ENCODE measurements at regions of chr17 and their contacts with region 1.

Region 1: GRCh38 chr17:6843241-6843880 is 11.8 kb upstream of the TEKT1 start:
- DNase-seq: peak; percentile 12 to 48 (median 18)
- ATAC-seq: no peak
- H3K4me3 ChIP-seq: no peak overlapping the region
- H3K27ac ChIP-seq: no peak overlapping the region
- H3K4me1 ChIP-seq: no peaks in the 10 kb centered on the region; a peak in 2 of 5 replicates
- H3K27me3 ChIP-seq: no peaks in the 10 kb centered on the region; a peak in 2 of 5 replicates
- CTCF ChIP-seq: peak; percentile 26 to 61 (median 37); a peak in 3 of 6 replicates
- EP300 ChIP-seq: no peak
- POLR2A ChIP-seq: no peak
- RAD21 ChIP-seq: peak; percentile 48 to 75; a peak in 3 of 4 replicates

Region 2: DNA sequence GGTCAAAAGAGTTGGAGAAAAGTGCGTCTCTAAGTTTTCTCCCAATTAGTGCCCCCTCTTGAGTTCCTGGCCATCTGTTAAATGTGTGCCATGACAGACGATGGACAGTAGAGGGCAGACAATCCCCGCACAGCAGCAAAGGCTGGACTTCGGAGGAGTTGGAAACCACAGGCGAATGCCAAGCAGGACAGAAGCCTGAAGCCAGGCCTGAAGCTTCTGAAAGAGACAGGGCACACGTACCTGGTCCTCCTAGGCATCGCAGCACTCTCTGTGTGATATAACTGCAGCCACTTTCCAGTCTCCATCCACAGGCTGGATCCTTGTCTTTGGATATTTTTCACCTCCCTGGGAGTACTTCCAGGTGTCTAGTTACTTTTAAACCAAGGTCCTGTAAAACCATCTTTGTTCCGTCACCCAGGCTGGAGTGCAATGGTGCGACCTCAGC is 177.3 kb before region 1 on chr17:
- CTCF ChIA-PET with region 1: no interaction called
- POLR2A ChIA-PET with region 1: no interaction called
- in situ Hi-C with region 1: no loop called
- intact Hi-C with region 1: loop called (anchors 5 kb)
- DNase-seq: peak; percentile 54 to 74 (median 62)
- ATAC-seq: peak; percentile 93
- H3K4me3 ChIP-seq: no peak overlapping the region
- H3K27ac ChIP-seq: no peak overlapping the region
- H3K4me1 ChIP-seq: no peaks in the 10 kb centered on the region
- H3K27me3 ChIP-seq: peaks cover 6 to 36% of the 10 kb centered on the region in 2 experiments; a peak in 4 of 5 replicates
- CTCF ChIP-seq: peak; percentile 85 to 86 (median 85)
- EP300 ChIP-seq: no peak
- POLR2A ChIP-seq: no peak
- RAD21 ChIP-seq: peak; percentile 70 to 82

Region 3: DNA sequence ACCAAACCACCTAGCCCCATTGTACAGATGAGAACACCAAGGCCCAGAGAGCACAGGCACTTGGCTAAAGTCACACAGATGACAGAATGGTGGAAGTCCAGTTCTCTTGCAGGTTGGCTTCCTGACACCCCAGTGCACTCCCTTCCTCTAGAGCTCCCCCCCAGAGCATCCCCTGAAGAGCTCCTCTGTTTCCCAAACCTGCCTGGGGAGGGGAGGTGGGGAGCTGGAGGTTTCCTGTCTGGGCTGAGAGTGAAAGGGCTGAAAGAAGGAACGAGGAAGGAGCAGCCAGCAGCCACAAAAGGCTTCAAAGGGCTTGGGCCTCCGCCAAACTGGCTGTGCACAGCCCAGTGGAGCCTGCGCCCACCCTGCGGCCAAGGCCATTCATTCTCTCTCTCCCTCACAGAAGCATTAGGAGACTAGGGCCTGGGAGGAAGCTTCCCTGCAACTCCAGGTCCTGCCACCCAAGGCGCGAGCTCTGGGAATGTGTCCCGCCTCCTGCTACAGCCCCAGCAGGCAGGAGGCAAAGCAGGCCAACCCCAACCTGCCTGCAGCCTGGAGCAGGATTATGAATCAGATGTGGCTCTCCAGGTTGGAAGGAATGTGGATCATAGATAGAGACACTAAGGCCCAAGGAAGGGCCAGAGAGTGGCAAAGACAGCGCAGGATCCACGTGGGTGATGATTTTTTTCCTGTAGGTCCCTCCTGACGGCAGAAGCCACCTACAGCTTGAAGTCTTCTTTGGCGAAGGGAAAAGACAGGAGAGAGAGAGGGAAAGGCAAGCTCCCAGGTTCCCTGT is 131.1 kb before region 1 on chr17:
- CTCF ChIA-PET with region 1: no interaction called
- POLR2A ChIA-PET with region 1: no interaction called
- in situ Hi-C with region 1: no loop called
- intact Hi-C with region 1: no loop called
- DNase-seq: no peak
- ATAC-seq: no peak
- H3K4me3 ChIP-seq: no peak overlapping the region
- H3K27ac ChIP-seq: no peak overlapping the region
- H3K4me1 ChIP-seq: peaks cover 0 to 14% of the 10 kb centered on the region in 2 experiments; a peak in 2 of 5 replicates
- H3K27me3 ChIP-seq: peaks cover 0 to 23% of the 10 kb centered on the region in 2 experiments; a peak in 2 of 5 replicates
- CTCF ChIP-seq: no peak
- EP300 ChIP-seq: no peak
- POLR2A ChIP-seq: no peak
- RAD21 ChIP-seq: no peak

Region 4: DNA sequence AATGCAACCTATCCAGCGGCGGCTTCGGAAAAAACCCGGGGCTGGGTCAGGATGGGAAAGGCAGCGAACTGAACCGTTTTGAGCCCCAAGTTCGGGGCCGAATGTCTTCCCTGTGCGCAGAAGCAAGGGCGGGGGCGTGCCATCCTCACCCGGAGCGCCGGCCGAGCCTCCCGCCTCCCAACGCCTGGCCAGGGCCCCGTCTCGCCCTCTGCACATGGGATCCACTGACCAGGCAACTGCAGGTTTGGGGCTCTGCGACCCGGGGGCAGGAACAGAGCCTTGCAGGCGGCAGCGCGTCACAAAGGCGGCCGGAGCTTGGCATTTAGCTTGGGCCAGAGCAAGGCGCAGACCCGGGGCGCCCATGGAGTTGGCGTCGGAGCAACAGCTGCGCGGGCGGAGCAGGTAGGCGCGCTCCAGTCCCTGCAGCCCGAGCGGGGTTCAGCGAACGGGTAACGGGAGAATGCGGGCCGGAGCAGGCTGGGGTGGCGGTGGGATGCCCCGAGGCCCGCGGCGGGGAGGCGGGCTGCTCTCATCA is 67.4 kb before region 1 on chr17 and contains the start of gene FBXO39:
- CTCF ChIA-PET with region 1: no interaction called
- POLR2A ChIA-PET with region 1: no interaction called
- in situ Hi-C with region 1: no loop called
- intact Hi-C with region 1: no loop called
- DNase-seq: no peak
- ATAC-seq: no peak
- H3K4me3 ChIP-seq: no peak within 1 kb of the TSS
- H3K27ac ChIP-seq: no peak within 1 kb of the TSS
- H3K4me1 ChIP-seq: peaks cover 0 to 6% of the 10 kb centered on the region in 2 experiments; a peak in 1 of 5 replicates
- H3K27me3 ChIP-seq: peaks cover 12 to 38% of the 10 kb centered on the region in 2 experiments; a peak in 4 of 5 replicates
- CTCF ChIP-seq: no peak
- EP300 ChIP-seq: no peak
- POLR2A ChIP-seq: no peak
- RAD21 ChIP-seq: no peak
- polyA plus RNA-seq, gene FBXO39: not detected

Region 5: DNA sequence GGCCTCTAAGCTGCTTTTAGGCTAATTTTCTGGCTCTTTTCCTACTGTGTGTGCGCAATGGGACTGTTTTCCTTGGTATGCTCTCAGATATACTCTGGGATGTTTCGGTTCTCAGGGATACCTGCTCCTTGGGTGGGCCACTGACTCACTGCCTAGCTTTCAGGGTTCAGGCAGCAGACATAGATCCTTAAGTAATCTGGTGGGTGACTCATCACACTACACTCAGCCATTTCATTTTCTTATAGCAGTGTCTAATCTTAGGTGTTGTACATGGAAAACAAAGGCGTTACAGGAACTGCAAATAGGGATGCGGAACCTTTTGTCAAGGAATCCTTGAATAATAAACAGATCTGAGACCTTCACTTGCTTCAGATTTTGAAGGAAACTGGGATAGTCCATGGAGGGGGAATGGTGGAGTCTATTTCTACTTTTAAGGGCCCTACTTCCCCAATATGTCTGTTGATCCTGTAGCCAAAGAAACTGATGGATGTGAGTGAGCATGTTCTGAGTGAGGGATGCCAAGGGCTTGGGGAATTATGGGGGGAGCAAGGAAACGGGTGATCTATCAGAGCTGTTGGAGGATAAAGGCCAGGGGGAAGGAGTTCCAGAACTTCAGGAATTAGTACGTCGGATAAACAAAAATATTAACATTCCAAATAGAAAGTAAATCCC is 28.9 kb after region 1 on chr17:
- CTCF ChIA-PET with region 1: no interaction called
- POLR2A ChIA-PET with region 1: no interaction called
- in situ Hi-C with region 1: no loop called
- intact Hi-C with region 1: no loop called
- DNase-seq: no peak
- ATAC-seq: no peak
- H3K4me3 ChIP-seq: no peak overlapping the region
- H3K27ac ChIP-seq: no peak overlapping the region
- H3K4me1 ChIP-seq: no peaks in the 10 kb centered on the region
- H3K27me3 ChIP-seq: peaks cover 3 to 6% of the 10 kb centered on the region in 2 experiments; a peak in 4 of 5 replicates
- CTCF ChIP-seq: no peak
- EP300 ChIP-seq: no peak
- POLR2A ChIP-seq: no peak
- RAD21 ChIP-seq: no peak

Region 6: GRCh38 chr17:6903326-6903900 is 60.1 kb after region 1 on chr17:
- CTCF ChIA-PET with region 1: no interaction called
- POLR2A ChIA-PET with region 1: no interaction called
- in situ Hi-C with region 1: no loop called
- intact Hi-C with region 1: no loop called
- DNase-seq: no peak
- ATAC-seq: no peak
- H3K4me3 ChIP-seq: no peak overlapping the region
- H3K27ac ChIP-seq: no peak overlapping the region
- H3K4me1 ChIP-seq: no peaks in the 10 kb centered on the region
- H3K27me3 ChIP-seq: no peaks in the 10 kb centered on the region
- CTCF ChIP-seq: no peak
- EP300 ChIP-seq: no peak
- POLR2A ChIP-seq: no peak
- RAD21 ChIP-seq: no peak

Region 7: DNA sequence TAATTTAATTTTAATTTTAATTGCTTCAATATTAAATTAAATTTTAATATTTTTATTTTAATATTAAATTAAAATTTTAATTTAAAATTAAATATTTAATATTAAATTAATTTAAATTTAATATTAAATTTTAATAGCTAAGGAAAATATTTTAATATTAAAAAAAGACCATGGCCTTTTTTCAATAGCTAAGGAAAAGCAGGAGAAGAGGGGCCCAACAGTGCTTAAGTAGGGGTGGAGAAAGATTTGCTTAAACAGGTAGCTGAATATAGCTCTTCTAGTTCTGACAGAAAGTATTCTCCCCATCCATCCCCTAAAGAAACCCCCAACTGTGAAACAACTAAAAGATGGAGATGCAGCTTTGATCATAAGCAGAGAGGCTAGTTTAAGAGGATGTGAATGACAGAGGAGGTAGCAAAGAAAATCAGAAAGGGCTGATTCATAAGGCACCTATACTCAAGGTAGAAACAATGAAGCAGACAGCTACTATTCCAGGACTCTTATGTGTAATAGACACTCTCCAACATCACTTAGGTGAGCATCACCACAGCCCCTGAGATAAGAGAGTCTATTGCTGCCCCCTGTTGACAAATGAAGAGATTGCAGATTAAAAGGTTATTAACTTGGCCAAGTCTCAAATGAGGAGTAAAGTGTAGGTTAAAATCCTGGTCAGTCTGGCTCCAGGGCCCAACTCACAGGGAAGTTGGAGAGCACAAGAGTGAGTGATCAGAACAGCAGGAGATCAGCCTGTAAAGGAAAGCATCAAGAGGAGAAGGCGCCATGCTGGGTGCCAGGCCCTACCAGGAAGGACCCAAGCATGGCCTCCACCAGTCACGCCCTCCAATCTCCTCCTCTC is 161.3 kb after region 1 on chr17:
- CTCF ChIA-PET with region 1: interaction called, 7 read pairs
- POLR2A ChIA-PET with region 1: interaction called, 5 read pairs
- in situ Hi-C with region 1: no loop called
- intact Hi-C with region 1: loop called (anchors 2 kb)
- DNase-seq: peak; percentile 41 to 69 (median 48)
- ATAC-seq: peak; percentile 84
- H3K4me3 ChIP-seq: no peak overlapping the region
- H3K27ac ChIP-seq: no peak overlapping the region
- H3K4me1 ChIP-seq: peaks cover 6% of the 10 kb centered on the region in 2 experiments; a peak in 4 of 5 replicates
- H3K27me3 ChIP-seq: no peaks in the 10 kb centered on the region
- CTCF ChIP-seq: peak; percentile 70 to 80 (median 72)
- EP300 ChIP-seq: no peak
- POLR2A ChIP-seq: no peak
- RAD21 ChIP-seq: peak; percentile 79 to 88

Region 8: DNA sequence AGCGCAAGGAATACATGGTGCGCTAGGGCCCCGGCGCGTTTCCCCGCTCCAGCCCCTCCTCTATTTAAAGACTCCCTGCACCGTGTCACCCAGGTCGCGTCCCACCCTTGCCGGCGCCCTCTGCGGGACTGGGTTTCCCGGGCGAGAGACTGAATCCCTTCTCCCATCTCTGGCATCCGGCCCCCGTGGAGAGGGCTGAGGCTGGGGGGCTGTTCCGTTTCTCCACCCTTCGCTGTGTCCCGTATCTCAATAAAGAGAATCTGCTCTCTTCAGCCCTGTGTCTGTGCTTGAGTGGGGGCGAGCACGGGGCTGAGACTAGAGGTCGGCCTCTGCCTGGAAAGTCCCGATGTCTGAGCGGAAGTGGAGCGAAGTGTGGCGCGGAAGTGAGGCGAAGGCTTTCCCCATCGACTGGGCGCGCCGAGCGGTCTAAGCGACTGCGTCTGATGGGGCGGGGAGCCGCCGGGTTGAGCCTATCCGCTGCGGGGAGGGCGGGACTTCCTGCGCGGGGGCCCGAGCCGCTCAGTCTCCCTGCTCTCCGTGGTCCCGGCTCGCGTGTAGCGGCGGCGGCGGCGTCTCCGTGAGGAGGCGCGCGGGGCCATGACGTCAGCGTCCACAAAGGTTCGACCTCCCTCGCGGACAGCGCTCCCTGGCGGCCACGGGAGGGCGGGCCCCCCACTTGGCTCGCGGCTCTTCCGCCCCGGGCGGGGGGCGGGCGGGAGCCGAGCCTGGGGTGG is 171.1 kb after region 1 on chr17:
- CTCF ChIA-PET with region 1: no interaction called
- POLR2A ChIA-PET with region 1: interaction called, 4 read pairs
- in situ Hi-C with region 1: loop called (anchors 5 kb)
- intact Hi-C with region 1: no loop called
- DNase-seq: peak; percentile 82 to 95 (median 86)
- ATAC-seq: peak; percentile 92
- H3K4me3 ChIP-seq: peak overlapping the region; percentile 81
- H3K27ac ChIP-seq: peak overlapping the region; percentile 96
- H3K4me1 ChIP-seq: peaks cover 39 to 50% of the 10 kb centered on the region in 2 experiments
- H3K27me3 ChIP-seq: no peaks in the 10 kb centered on the region
- CTCF ChIP-seq: peak in 2 of 3 experiments; percentile 63 to 74; a peak in 5 of 6 replicates
- EP300 ChIP-seq: no peak
- POLR2A ChIP-seq: peak; percentile 88
- RAD21 ChIP-seq: peak in 1 of 2 experiments; percentile 23; a peak in 2 of 4 replicates